Prostate gland (tissue), 2 donors: ENCODE measurements at regions of chr17 and their contacts with region 1.

Region 1: DNA sequence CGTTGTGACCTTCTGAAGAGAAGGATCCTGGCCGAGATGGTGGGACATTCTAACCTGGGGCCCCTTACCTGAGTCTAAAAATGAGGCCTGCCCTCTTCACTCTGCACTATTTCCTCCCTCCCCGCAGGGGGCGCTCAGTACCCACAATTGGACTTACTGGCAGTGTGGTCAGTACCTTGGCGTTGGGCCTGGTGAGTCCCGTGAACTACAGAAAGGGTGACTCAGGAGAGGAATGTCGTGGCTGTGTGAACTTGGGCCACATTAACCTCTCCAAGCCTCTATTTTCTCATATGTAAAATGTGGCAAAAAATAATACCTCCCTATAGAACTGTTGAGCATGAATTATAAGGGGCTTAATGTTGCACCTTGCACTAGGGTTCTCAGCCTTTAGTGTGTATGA is 3.9 kb downstream of the RSAD1 start:
- DNase-seq: peak; percentile 95
- H3K4me3 ChIP-seq: no peak overlapping the region
- H3K27ac ChIP-seq: peak overlapping the region; percentile 70 to 76
- H3K4me1 ChIP-seq: peaks cover 6% of the 10 kb centered on the region
- H3K27me3 ChIP-seq: no peaks in the 10 kb centered on the region
- CTCF ChIP-seq: peak; percentile 66 to 98 (median 97)
- POLR2A ChIP-seq: peak; percentile 21

Region 2: GRCh38 chr17:50527155-50527762 is 44.7 kb after region 1 on chr17:
- intact Hi-C with region 1: no loop called
- DNase-seq: no peak
- H3K4me3 ChIP-seq: no peak overlapping the region
- H3K27ac ChIP-seq: no peak overlapping the region
- H3K4me1 ChIP-seq: peaks cover 2% of the 10 kb centered on the region
- H3K27me3 ChIP-seq: no peaks in the 10 kb centered on the region
- CTCF ChIP-seq: no peak
- POLR2A ChIP-seq: no peak

Region 3: GRCh38 chr17:50541716-50542688 is 59.5 kb after region 1 on chr17:
- intact Hi-C with region 1: loop called (anchors 1 kb)
- DNase-seq: peak; percentile 89
- H3K4me3 ChIP-seq: peak overlapping the region; percentile 35 to 38
- H3K27ac ChIP-seq: peak overlapping the region; percentile 87 to 88
- H3K4me1 ChIP-seq: peaks cover 24% of the 10 kb centered on the region
- H3K27me3 ChIP-seq: no peaks in the 10 kb centered on the region
- CTCF ChIP-seq: peak in 1 of 4 experiments; percentile 14
- POLR2A ChIP-seq: peak; percentile 64

Region 4: DNA sequence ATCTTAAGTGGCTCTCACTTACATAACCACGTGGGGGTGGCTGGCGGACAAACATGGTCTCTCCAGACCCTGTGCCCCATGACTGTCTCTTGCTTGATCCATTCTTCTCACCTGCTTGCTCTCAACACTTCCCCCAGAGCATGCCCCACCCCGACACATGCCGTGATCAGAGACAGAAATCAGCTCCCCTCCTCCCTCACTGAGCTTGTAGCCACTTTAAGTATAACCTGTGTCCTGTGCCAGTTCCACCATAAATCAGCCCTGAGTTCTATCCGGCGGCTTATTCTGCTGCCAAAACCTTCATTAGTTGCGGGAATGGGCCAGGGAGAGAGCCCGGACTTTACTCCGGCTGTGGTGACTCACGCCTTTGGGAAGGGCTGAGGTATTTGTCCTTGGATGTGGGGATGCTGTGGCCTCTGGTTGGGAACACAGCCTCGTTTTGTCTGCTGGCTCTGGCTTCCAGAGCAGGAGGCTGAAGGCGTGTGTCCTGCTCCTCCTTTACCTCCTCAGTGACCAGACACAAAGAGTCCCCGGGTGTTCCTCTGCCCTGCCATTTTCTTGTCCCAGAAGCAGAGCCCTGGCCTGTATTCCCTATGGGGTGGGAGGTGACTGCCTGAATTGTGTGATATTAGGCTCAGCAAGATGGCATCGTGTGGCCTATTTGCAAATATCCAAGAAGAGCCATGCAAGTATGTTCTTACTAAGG is 204.1 kb after region 1 on chr17:
- intact Hi-C with region 1: loop called (anchors 5 kb)
- DNase-seq: peak; percentile 68
- H3K4me3 ChIP-seq: no peak overlapping the region
- H3K27ac ChIP-seq: peak overlapping the region; percentile 60 to 68
- H3K4me1 ChIP-seq: peaks cover 8% of the 10 kb centered on the region
- H3K27me3 ChIP-seq: no peaks in the 10 kb centered on the region
- CTCF ChIP-seq: no peak
- POLR2A ChIP-seq: no peak

Region 5: GRCh38 chr17:50841949-50842354 is 359.4 kb after region 1 on chr17:
- intact Hi-C with region 1: loop called (anchors 5 kb)
- DNase-seq: peak; percentile 55
- H3K4me3 ChIP-seq: no peak overlapping the region
- H3K27ac ChIP-seq: no peak overlapping the region
- H3K4me1 ChIP-seq: no peaks in the 10 kb centered on the region
- H3K27me3 ChIP-seq: no peaks in the 10 kb centered on the region
- CTCF ChIP-seq: peak; percentile 68 to 88 (median 85)
- POLR2A ChIP-seq: no peak